ENCODE measurements at regions of chr7 and their contacts with region 1.

Region 1: GRCh38 chr7:2709553-2710285 is 21.7 kb downstream of the AMZ1 start:
- DNase-seq: peak; percentile 59 to 85
- H3K4me3 ChIP-seq: no peak overlapping the region
- H3K4me1 ChIP-seq: no peaks in the 10 kb centered on the region
- H3K27me3 ChIP-seq: no peaks in the 10 kb centered on the region

Region 2: DNA sequence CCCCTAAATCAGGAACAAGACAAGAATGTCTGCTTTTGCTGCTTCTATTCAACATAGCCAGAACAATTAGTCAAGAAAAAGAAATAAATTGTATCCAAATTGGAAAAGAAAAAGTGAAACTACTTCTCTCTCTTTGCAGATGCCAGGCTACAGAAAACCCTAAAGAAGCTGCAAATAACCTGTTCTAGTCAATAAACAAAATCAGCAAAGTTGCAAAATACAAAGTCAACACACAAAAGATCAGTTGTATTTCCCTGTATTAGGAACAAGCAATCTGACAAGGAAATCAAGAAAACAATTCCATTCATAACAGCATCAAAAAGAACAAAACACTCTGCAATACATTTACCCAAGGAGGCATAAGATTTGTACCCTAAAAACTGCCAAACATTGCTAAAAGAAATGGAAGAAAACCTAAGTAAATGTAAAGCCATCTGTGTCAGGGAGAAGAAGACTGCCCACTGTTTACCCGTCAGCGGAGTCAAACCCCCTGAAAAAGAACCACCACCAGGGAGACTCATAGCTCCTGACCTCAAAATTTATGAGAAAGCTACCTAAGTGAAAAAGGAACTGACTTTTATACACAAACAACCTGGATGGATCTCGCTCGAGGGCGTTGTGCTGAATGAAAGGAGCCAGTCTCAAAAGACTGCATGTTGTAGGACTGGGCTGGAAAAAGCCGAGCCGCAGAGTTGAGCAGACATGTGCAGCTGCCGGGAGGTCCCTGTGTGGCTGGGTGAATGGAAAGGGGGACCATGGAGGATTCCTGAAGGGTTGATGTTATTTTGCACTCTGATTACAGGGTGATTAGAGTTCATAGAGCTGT is 740.0 kb before region 1 on chr7:
- in situ Hi-C with region 1: no loop called
- DNase-seq: no peak
- H3K4me3 ChIP-seq: no peak overlapping the region
- H3K4me1 ChIP-seq: no peaks in the 10 kb centered on the region
- H3K27me3 ChIP-seq: no peaks in the 10 kb centered on the region

Region 3: GRCh38 chr7:2018569-2019063 is 691.1 kb before region 1 on chr7:
- in situ Hi-C with region 1: no loop called
- DNase-seq: no peak
- H3K4me3 ChIP-seq: no peak overlapping the region
- H3K4me1 ChIP-seq: no peaks in the 10 kb centered on the region
- H3K27me3 ChIP-seq: no peaks in the 10 kb centered on the region

Region 4: GRCh38 chr7:2451171-2452073 is 258.3 kb before region 1 on chr7:
- in situ Hi-C with region 1: loop called (anchors 10 kb)
- DNase-seq: peak; percentile 55 to 92
- H3K4me3 ChIP-seq: no peak overlapping the region
- H3K4me1 ChIP-seq: peaks cover 3% of the 10 kb centered on the region; the same call in 1 of the 2 replicates
- H3K27me3 ChIP-seq: no peaks in the 10 kb centered on the region

Region 5: GRCh38 chr7:3092468-3092867 is 382.7 kb after region 1 on chr7:
- in situ Hi-C with region 1: no loop called
- DNase-seq: no peak
- H3K4me3 ChIP-seq: no peak overlapping the region
- H3K4me1 ChIP-seq: no peaks in the 10 kb centered on the region
- H3K27me3 ChIP-seq: no peaks in the 10 kb centered on the region

Measured in HAP-1 (cell line).